A673 (cell line): ENCODE measurements at regions of chr10 and their contacts with region 1.

Region 1: GRCh38 chr10:36725581-36726520 is 399.5 kb upstream of the ANKRD30A start:
- DNase-seq: peak; percentile 98
- H3K4me3 ChIP-seq: no peak overlapping the region
- H3K27ac ChIP-seq: peak overlapping the region; percentile 54
- H3K4me1 ChIP-seq: peaks cover 51% of the 10 kb centered on the region
- H3K27me3 ChIP-seq: no peaks in the 10 kb centered on the region
- CTCF ChIP-seq: peak; percentile 76

Region 2: GRCh38 chr10:35640951-35641675 is 1084.7 kb before region 1 on chr10:
- CTCF ChIA-PET with region 1: interaction called, 5 read pairs
- POLR2A ChIA-PET with region 1: no interaction called
- intact Hi-C with region 1: loop called (anchors 1 kb)
- DNase-seq: peak; percentile 94
- H3K4me3 ChIP-seq: peak overlapping the region; percentile 88
- H3K27ac ChIP-seq: peak overlapping the region; percentile 84
- H3K4me1 ChIP-seq: peaks cover 28% of the 10 kb centered on the region
- H3K27me3 ChIP-seq: no peaks in the 10 kb centered on the region
- CTCF ChIP-seq: 0 out of 2 replicates have a peak, but pooled peaks have one; percentile 10

Region 3: DNA sequence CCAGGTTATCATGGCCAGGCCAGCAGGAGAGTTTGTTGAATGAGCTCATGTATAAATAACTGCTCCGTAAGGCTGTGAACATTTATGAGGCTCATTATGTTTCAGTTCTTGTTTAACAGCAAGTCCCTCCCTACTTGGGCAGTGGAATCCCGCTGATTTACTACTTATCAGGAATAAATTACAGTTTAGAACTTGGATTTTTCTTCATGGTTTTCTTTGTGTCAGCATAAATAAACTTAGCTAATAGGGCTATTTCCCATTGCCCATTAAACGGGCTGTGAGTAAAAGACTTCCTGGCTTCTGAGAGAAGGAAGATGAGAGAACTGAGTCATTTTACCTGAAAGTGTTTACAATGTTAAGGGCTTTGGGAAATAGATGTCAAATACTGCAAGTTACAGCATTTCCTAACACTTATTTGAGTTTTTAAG is 302.0 kb before region 1 on chr10:
- CTCF ChIA-PET with region 1: no interaction called
- POLR2A ChIA-PET with region 1: no interaction called
- intact Hi-C with region 1: loop called (anchors 10 kb)
- DNase-seq: peak; percentile 97
- H3K4me3 ChIP-seq: no peak overlapping the region
- H3K27ac ChIP-seq: no peak overlapping the region
- H3K4me1 ChIP-seq: peaks cover 26% of the 10 kb centered on the region
- H3K27me3 ChIP-seq: no peaks in the 10 kb centered on the region
- CTCF ChIP-seq: no peak

Region 4: DNA sequence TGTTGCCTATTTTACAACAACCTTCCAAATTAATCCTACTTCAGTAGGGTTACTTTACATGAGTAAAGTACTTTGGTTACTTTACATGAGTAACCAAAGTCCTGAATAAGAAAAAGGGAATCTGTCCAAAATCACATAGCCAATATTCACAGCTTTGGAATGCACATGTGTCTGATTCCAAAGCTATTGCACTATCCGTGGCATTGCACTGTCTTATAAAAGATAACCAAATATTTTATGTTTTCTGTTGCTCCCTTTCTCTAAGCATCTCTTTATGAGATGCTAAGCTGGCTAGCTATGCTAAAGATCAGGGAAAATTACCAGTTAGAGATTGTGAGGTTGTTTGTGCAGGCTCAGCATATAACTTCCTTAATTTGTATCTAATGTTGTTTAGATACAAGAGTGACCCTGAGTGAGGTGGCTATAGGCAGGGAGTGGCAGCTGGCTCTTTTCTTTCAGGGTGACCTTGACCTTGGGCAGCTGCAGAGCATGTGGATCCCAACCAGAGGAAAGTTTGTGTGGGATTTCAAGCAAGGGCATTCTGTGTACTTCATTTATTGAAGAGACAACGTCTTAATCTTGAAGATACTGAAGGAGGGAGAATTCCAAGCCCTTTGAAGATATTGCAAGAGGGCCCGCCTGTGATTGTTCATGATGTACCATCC is 33.4 kb after region 1 on chr10:
- CTCF ChIA-PET with region 1: no interaction called
- POLR2A ChIA-PET with region 1: no interaction called
- intact Hi-C with region 1: no loop called
- DNase-seq: no peak
- H3K4me3 ChIP-seq: no peak overlapping the region
- H3K27ac ChIP-seq: no peak overlapping the region
- H3K4me1 ChIP-seq: peaks cover 5% of the 10 kb centered on the region
- H3K27me3 ChIP-seq: no peaks in the 10 kb centered on the region
- CTCF ChIP-seq: no peak